ENCODE measurements at regions of chr4 and their contacts with region 1.

Region 1: DNA sequence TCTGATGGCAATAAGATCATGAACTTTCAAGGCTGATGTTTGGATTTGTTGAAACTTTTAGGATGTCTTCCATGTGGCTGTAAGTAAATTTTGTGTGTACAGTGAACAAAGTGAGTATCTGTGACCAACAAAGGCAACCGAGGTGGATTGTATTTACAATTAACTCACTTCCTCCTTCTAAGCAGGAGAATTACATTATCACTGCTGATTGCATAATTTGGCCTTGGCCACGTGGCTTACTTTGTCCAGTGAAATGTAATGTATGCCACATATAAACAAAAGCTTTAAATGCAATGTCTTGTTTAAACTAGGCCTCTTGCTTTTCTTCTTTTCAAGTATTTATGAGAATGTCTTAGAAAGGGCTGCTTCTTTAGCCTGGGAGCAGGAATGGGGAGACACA is 66.3 kb upstream of the MAD2L1 start:
- DNase-seq: peak; percentile 37
- ATAC-seq: peak; percentile 32; the same call in 1 of the 2 replicates
- H3K4me3 ChIP-seq: no peak overlapping the region
- H3K27ac ChIP-seq: no peak overlapping the region
- H3K4me1 ChIP-seq: no peaks in the 10 kb centered on the region
- H3K27me3 ChIP-seq: no peaks in the 10 kb centered on the region
- CTCF ChIP-seq: no peak
- POLR2A ChIP-seq: no peak
- RAD21 ChIP-seq: no peak

Region 2: DNA sequence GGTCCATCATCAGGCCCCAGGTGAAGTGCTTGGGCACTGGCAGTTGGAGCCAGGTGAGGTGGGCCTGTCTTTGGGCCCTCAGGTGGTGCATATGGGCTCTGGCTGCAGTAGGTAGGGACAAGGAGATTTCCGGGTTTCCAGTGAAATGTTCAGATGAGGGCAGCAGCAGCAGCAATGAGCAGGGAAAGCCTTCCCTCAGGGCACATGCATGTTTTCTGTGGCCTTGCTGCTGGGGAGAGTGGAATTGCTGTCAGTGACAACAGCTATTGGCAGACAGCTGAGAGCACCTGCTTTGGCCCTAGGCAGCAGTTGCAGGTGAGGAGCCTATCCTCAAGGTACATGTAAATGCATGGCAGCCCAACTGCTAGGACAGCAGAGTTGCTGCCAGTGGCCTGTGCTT is 1306.7 kb after region 1 on chr4:
- CTCF ChIA-PET with region 1: no interaction called
- POLR2A ChIA-PET with region 1: interaction called, 10 read pairs
- dilution Hi-C with region 1: no loop called
- in situ Hi-C with region 1: no loop called
- intact Hi-C with region 1: no loop called
- DNase-seq: no peak
- ATAC-seq: no peak
- H3K4me3 ChIP-seq: no peak overlapping the region
- H3K27ac ChIP-seq: no peak overlapping the region
- H3K4me1 ChIP-seq: no peaks in the 10 kb centered on the region
- H3K27me3 ChIP-seq: no peaks in the 10 kb centered on the region
- CTCF ChIP-seq: no peak
- POLR2A ChIP-seq: no peak
- RAD21 ChIP-seq: no peak

Measured in IMR-90 (cell line).